Activated CD8-positive, alpha-beta memory T cell treated with anti-CD3 and anti-CD28 coated beads, Interleukin-2, amount 10 ng/mL, durations not matched to agents 7 days and 5 days (primary cell): ENCODE measurements at regions of chr16 and their contacts with region 1.

Region 1: GRCh38 chr16:68064791-68065365 is 20.3 kb upstream of the NFATC3 start:
- DNase-seq: peak; percentile 88
- ATAC-seq: peak; percentile 76
- H3K4me3 Mint-ChIP-seq: no peak overlapping the region
- H3K27ac Mint-ChIP-seq: peak overlapping the region; percentile 88
- H3K4me1 Mint-ChIP-seq: peaks cover 81% of the 10 kb centered on the region
- H3K27me3 Mint-ChIP-seq: no peaks in the 10 kb centered on the region

Region 2: DNA sequence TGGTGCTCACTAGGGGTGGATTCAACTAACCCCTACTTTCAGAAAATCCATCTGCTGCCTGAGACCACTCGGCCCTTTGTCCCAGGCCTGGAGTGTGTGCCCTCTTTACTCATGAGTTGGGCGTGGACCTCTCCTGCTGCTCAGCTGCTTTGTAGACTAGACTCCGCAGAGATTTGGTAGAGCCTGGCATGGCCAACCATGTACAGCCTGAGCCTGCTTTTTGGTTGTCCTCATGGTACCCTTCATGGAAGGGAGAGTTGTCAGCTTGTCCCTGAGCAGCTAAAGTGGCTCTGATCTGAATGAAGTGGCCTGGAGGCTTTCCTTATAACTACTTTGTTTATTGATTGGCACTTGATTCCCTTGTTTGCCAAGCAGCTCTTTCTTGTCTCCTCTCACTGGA is 190.5 kb before region 1 on chr16:
- CTCF ChIA-PET with region 1: no interaction called
- DNase-seq: no peak
- ATAC-seq: no peak
- H3K4me3 Mint-ChIP-seq: peak overlapping the region; percentile 80
- H3K27ac Mint-ChIP-seq: peak overlapping the region; percentile 90
- H3K4me1 Mint-ChIP-seq: peaks cover 31% of the 10 kb centered on the region
- H3K27me3 Mint-ChIP-seq: no peaks in the 10 kb centered on the region

Region 3: GRCh38 chr16:67959520-67959919 is 105.4 kb before region 1 on chr16:
- CTCF ChIA-PET with region 1: no interaction called
- DNase-seq: no peak
- ATAC-seq: no peak
- H3K4me3 Mint-ChIP-seq: no peak overlapping the region
- H3K27ac Mint-ChIP-seq: no peak overlapping the region
- H3K4me1 Mint-ChIP-seq: no peaks in the 10 kb centered on the region
- H3K27me3 Mint-ChIP-seq: no peaks in the 10 kb centered on the region

Region 4: DNA sequence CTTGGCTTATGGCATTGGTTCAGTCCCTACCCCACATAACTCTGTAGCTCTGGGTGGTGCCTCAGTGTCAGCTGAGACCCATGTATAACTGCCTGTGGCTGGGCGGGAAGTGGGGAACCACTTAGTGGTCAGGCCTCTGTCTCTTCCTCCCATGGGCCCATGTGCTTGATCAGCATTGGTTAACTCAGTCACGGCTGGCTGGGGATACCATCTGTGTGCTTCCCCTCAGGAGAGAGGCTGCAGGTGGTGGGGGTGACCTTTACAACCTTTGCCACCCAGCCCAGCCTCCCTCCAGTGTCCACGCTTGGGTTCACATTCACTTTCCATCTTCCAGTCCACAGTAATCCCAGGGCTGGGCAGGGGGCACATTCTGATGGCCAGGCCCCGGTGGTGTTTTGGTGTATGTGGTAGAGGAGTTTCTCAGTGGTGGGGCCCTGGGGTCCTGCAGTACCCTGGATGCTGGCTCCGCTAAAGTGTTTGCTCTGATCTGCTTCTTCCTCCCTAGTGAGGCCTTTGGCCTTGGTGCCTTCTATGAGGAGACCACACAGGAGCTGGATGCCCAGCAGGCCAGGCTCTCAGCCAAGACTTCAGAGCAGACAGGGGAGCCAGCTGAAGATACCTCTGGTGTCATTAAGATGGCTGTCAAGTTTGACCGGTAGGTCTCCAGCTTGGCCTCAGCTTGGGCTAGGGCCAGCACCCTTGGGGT is 10.1 kb after region 1 on chr16:
- CTCF ChIA-PET with region 1: interaction called, 211 read pairs
- DNase-seq: peak; percentile 98
- ATAC-seq: peak; percentile 71
- H3K4me3 Mint-ChIP-seq: peak overlapping the region; percentile 38
- H3K27ac Mint-ChIP-seq: peak overlapping the region; percentile 93
- H3K4me1 Mint-ChIP-seq: peaks cover 89% of the 10 kb centered on the region
- H3K27me3 Mint-ChIP-seq: no peaks in the 10 kb centered on the region

Region 5: DNA sequence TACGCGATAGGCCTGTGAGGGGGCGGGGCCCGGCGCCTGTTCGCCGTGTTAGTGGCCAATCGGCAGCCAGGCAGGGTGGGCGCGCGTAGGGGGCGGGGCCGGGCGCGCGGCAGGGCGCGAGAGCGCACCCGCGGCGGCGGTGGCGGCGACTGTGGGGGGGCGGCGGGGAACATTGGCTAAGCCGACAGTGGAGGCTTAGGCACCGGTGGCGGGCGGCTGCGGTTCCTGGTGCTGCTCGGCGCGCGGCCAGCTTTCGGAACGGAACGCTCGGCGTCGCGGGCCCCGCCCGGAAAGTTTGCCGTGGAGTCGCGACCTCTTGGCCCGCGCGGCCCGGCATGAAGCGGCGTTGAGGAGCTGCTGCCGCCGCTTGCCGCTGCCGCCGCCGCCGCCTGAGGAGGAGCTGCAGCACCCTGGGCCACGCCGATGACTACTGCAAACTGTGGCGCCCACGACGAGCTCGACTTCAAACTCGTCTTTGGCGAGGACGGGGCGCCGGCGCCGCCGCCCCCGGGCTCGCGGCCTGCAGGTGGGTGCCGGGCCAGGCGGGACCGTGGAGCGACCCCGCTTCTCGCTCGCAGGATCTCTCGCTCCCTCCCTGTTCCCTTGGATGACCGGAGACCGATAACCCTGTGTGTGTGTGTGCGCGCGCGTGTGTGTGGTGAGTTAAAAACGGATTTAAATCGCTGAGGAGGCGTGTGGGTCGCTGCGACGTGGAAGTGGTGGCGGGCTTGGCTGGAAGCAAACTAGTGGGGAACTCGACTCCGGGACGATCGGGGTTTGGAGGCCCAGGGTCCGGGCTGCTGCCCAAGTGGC is 20.6 kb after region 1 on chr16 and contains the start of gene NFATC3:
- CTCF ChIA-PET with region 1: interaction called, 211 read pairs
- DNase-seq: peak; percentile 99
- ATAC-seq: peak; percentile 79
- H3K4me3 Mint-ChIP-seq: peak within 1 kb of the TSS; percentile 94
- H3K27ac Mint-ChIP-seq: peak within 1 kb of the TSS; percentile 94
- H3K4me1 Mint-ChIP-seq: peaks cover 57% of the 10 kb centered on the region
- H3K27me3 Mint-ChIP-seq: no peaks in the 10 kb centered on the region
- total RNA-seq, gene NFATC3: 176 to 183 TPM

Region 6: GRCh38 chr16:68093816-68094613 is 29.1 kb after region 1 on chr16:
- CTCF ChIA-PET with region 1: interaction called, 11 read pairs
- DNase-seq: no peak
- ATAC-seq: peak; percentile 71
- H3K4me3 Mint-ChIP-seq: no peak overlapping the region
- H3K27ac Mint-ChIP-seq: peak overlapping the region; percentile 41
- H3K4me1 Mint-ChIP-seq: peaks cover 69% of the 10 kb centered on the region
- H3K27me3 Mint-ChIP-seq: no peaks in the 10 kb centered on the region

Region 7: GRCh38 chr16:68227183-68227793 is 162.4 kb after region 1 on chr16:
- CTCF ChIA-PET with region 1: interaction called, 10 read pairs
- DNase-seq: peak; percentile 65
- ATAC-seq: peak; percentile 70
- H3K4me3 Mint-ChIP-seq: no peak overlapping the region
- H3K27ac Mint-ChIP-seq: peak overlapping the region; percentile 81
- H3K4me1 Mint-ChIP-seq: peaks cover 33% of the 10 kb centered on the region
- H3K27me3 Mint-ChIP-seq: no peaks in the 10 kb centered on the region